ENCODE measurements at regions of chrX and their contacts with region 1.

Region 1: GRCh38 chrX:41333744-41334259 is at the start of gene DDX3X:
- DNase-seq: peak; percentile 85
- H3K4me3 Mint-ChIP-seq: peak within 1 kb of the TSS; percentile 92
- H3K27ac Mint-ChIP-seq: peak within 1 kb of the TSS; percentile 99
- H3K4me1 Mint-ChIP-seq: peaks cover 22% of the 10 kb centered on the region
- H3K27me3 Mint-ChIP-seq: no peaks in the 10 kb centered on the region
- total RNA-seq, gene DDX3X: 163 to 171 TPM

Region 2: DNA sequence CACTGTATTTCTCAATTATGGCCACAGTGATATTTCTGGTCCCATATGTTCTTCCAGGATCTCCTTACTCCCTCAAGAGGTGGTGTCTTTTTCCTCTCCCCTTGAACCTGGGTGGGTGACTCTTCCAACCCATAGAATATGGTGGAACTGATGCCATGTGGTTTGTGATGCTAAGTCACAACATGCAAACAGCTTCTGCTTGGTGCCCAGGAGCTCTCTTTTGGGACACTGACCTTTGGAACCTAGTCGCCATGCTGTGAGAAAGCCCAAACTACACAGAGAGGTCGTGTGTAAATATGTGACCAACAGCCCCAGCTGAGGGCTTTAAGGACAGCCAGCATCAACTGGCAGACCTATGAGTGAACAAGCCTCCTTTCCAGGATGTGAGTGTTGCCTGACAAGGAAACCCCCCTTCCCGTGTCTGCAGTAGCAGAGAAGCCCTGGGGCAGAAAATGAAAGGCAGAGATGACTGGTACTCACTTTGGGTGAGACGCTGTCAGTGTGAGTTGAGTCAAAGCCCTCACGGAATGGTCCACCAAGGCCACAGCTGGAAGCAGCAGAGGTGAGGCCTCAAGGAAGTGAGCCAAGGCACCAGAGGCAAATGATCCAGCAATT is 1459.5 kb before region 1 on chrX:
- CTCF ChIA-PET with region 1: no interaction called
- intact Hi-C with region 1: loop called (anchors 10 kb)
- DNase-seq: peak; percentile 89
- H3K4me3 Mint-ChIP-seq: no peak overlapping the region
- H3K27ac Mint-ChIP-seq: peak overlapping the region; percentile 89
- H3K4me1 Mint-ChIP-seq: peaks cover 49% of the 10 kb centered on the region
- H3K27me3 Mint-ChIP-seq: no peaks in the 10 kb centered on the region

Region 3: GRCh38 chrX:40647307-40648197 is 686.2 kb before region 1 on chrX and contains the start of gene CXorf38:
- CTCF ChIA-PET with region 1: no interaction called
- intact Hi-C with region 1: loop called (anchors 5 kb)
- DNase-seq: peak; percentile 94
- H3K4me3 Mint-ChIP-seq: peak within 1 kb of the TSS; percentile 84
- H3K27ac Mint-ChIP-seq: peak within 1 kb of the TSS; percentile 91
- H3K4me1 Mint-ChIP-seq: peaks cover 25% of the 10 kb centered on the region
- H3K27me3 Mint-ChIP-seq: no peaks in the 10 kb centered on the region
- total RNA-seq, gene CXorf38: 23.2 to 23.3 TPM

Region 4: GRCh38 chrX:41084044-41084892 is 249.5 kb before region 1 on chrX:
- CTCF ChIA-PET with region 1: no interaction called
- intact Hi-C with region 1: loop called (anchors 1 kb)
- DNase-seq: peak; percentile 96
- H3K4me3 Mint-ChIP-seq: peak overlapping the region; percentile 89
- H3K27ac Mint-ChIP-seq: peak overlapping the region; percentile 100
- H3K4me1 Mint-ChIP-seq: peaks cover 22% of the 10 kb centered on the region
- H3K27me3 Mint-ChIP-seq: no peaks in the 10 kb centered on the region

Region 5: DNA sequence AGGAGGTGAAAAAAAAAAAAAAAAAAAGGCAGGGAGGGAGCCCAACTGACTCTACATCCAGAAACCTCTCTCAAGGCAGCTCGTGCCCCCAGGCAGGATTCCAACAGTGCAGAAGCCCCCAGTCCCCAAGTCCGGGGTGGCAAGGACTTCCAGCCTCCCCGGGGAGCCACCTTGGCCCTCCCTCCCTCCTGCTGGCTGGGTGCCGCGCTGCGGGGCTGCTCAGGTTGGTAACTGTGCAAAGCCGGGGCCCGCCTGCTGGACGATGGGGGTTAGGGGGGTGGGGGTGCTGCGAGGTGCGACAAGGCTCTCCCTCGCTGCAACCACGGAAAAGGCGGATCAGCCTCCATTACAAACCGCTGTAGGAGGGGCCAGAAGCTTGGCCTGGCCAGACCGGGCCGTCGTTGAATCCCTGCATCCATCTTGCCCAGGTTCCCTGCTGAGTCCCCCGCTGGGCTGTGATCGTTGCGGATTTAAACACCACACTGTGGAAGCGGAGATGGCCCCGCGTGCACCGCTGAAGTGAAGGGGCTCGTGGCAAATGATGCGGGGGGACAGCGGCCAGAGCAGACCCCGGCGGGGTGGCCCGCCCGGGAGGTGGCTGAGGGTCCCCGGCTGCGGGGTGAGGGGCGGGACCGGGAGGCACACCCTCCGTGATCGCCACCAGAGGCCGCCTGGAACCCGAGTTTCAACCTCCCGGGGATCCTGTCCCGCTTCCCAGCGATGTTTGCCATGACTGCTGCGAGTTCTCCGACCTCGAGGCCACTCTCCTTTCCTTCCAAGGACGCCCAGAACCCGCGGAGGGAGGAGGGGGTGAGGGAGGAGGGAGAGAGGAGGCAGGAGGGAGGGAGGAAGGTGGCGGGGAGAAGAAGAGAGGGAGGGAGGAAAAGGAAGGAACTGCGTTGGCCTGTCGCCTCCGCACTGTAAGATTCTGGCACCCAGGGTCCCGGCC is 57.9 kb before region 1 on chrX:
- CTCF ChIA-PET with region 1: no interaction called
- intact Hi-C with region 1: loop called (anchors 1 kb)
- DNase-seq: peak; percentile 73
- H3K4me3 Mint-ChIP-seq: peak overlapping the region; percentile 74
- H3K27ac Mint-ChIP-seq: peak overlapping the region; percentile 41
- H3K4me1 Mint-ChIP-seq: peaks cover 7% of the 10 kb centered on the region
- H3K27me3 Mint-ChIP-seq: no peaks in the 10 kb centered on the region

Region 6: GRCh38 chrX:41382714-41383645 is 49.2 kb after region 1 on chrX:
- CTCF ChIA-PET with region 1: no interaction called
- intact Hi-C with region 1: loop called (anchors 1 kb)
- DNase-seq: peak; percentile 52
- H3K4me3 Mint-ChIP-seq: peak overlapping the region; percentile 70
- H3K27ac Mint-ChIP-seq: peak overlapping the region; percentile 96
- H3K4me1 Mint-ChIP-seq: peaks cover 26% of the 10 kb centered on the region
- H3K27me3 Mint-ChIP-seq: no peaks in the 10 kb centered on the region

Region 7: GRCh38 chrX:41412261-41413081 is 78.7 kb after region 1 on chrX:
- CTCF ChIA-PET with region 1: no interaction called
- intact Hi-C with region 1: no loop called
- DNase-seq: peak; percentile 28
- H3K4me3 Mint-ChIP-seq: no peak overlapping the region
- H3K27ac Mint-ChIP-seq: no peak overlapping the region
- H3K4me1 Mint-ChIP-seq: peaks cover 2% of the 10 kb centered on the region
- H3K27me3 Mint-ChIP-seq: no peaks in the 10 kb centered on the region